PC-9 (cell line): ENCODE measurements at regions of chr16 and their contacts with region 1.

Region 1: DNA sequence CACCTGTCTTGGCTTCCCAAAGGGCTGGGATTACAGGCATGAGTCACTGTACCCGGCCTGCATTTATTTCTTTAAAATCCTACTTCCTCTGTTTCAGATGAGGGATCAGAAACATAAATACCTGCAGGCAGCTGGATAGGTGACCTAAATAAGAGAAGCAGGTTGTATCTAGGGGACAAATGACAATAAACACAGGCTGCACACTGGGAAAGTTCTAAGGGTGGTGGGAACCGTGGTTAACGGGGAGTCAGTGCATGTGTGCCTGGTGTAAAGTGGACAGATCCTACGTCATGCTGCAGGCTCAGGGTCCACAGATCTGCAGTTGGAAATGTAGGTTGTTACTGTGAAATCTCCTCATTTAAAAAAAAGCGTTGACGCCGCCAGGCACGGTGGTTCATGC is 48.3 kb downstream of the PLCG2 start:
- DNase-seq: peak; percentile 8 to 56
- H3K4me3 ChIP-seq: no peak overlapping the region
- H3K27ac ChIP-seq: 0 out of 2 replicates have a peak overlapping the region, but pooled peaks have one; percentile 7
- H3K4me1 ChIP-seq: no peaks in the 10 kb centered on the region
- H3K27me3 ChIP-seq: no peaks in the 10 kb centered on the region
- CTCF ChIP-seq: no peak

Region 2: GRCh38 chr16:81088836-81089235 is 738.6 kb before region 1 on chr16:
- CTCF ChIA-PET with region 1: interaction called, 19 read pairs
- POLR2A ChIA-PET with region 1: no interaction called
- intact Hi-C with region 1: no loop called
- DNase-seq: no peak
- H3K4me3 ChIP-seq: no peak overlapping the region
- H3K27ac ChIP-seq: no peak overlapping the region
- H3K4me1 ChIP-seq: no peaks in the 10 kb centered on the region
- H3K27me3 ChIP-seq: no peaks in the 10 kb centered on the region
- CTCF ChIP-seq: no peak

Region 3: DNA sequence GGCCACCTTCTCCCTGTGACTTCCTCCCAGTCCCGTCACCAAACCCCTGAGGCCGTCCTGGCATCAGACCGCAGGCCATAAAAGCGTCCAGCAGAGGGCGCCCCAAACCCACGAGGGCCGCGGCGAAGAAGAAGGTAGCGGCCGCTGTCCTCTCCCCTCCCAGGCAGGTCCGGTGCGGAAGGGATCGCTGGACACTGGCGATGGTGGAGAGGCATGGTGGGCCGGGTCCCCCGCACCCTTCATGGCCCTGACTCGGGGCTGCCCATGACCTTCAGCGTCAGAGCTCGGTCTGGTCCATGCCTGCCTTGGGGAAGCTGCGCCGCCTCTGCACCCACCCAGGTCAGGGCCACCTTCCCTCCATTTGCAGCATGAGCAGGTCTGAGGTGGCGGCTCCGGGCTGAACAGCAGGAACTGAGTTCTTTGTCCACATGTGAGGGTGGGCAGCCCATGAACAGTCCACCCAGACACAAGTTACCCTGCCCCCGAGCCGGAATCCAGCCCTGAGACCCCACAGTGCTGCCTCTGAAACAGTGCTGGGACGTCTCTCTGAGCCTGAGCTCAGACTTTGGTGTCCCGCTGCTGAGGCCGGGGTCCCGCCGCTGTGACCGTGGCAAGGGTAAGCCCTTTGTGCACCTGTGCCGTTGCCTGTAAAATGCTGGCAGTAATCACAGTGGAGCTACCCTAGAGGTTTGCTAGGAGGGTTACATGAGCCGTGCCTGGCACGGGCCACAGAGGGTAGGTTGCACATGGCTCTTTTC is 423.6 kb before region 1 on chr16:
- CTCF ChIA-PET with region 1: no interaction called
- POLR2A ChIA-PET with region 1: no interaction called
- intact Hi-C with region 1: no loop called
- DNase-seq: peak; percentile 80 to 94
- H3K4me3 ChIP-seq: no peak overlapping the region; the same call in 1 of the 2 replicates
- H3K27ac ChIP-seq: no peak overlapping the region
- H3K4me1 ChIP-seq: peaks cover 50% of the 10 kb centered on the region
- H3K27me3 ChIP-seq: no peaks in the 10 kb centered on the region
- CTCF ChIP-seq: peak; percentile 91